Heart right ventricle (tissue), 16 donors: ENCODE measurements at regions of chr5 and their contacts with region 1.

Region 1: GRCh38 chr5:58886315-58887207 is 303.7 kb downstream of the RAB3C start:
- DNase-seq: peak; percentile 46 to 56
- ATAC-seq: peak; percentile 36 to 80 (median 50)
- H3K4me3 ChIP-seq: no peak overlapping the region
- H3K27ac ChIP-seq: peak overlapping the region in 1 of 10 donors; percentile 64
- H3K4me1 ChIP-seq: peaks cover 0 to 17% (median 8%) of the 10 kb centered on the region in 9 donors
- H3K27me3 ChIP-seq: no peaks in the 10 kb centered on the region
- CTCF ChIP-seq: peak; percentile 83 to 93 (median 88)

Region 2: GRCh38 chr5:59007460-59008063 is 121.0 kb after region 1 on chr5:
- intact Hi-C with region 1: loop called in 8 of 10 experiments (anchors 2 to 10 kb)
- DNase-seq: no peak
- ATAC-seq: no peak
- H3K4me3 ChIP-seq: no peak overlapping the region
- H3K27ac ChIP-seq: no peak overlapping the region
- H3K4me1 ChIP-seq: peaks cover 0 to 10% (median 4%) of the 10 kb centered on the region in 9 donors
- H3K27me3 ChIP-seq: no peaks in the 10 kb centered on the region
- CTCF ChIP-seq: peak in 8 of 9 donors; percentile 26 to 70 (median 58)

Region 3: DNA sequence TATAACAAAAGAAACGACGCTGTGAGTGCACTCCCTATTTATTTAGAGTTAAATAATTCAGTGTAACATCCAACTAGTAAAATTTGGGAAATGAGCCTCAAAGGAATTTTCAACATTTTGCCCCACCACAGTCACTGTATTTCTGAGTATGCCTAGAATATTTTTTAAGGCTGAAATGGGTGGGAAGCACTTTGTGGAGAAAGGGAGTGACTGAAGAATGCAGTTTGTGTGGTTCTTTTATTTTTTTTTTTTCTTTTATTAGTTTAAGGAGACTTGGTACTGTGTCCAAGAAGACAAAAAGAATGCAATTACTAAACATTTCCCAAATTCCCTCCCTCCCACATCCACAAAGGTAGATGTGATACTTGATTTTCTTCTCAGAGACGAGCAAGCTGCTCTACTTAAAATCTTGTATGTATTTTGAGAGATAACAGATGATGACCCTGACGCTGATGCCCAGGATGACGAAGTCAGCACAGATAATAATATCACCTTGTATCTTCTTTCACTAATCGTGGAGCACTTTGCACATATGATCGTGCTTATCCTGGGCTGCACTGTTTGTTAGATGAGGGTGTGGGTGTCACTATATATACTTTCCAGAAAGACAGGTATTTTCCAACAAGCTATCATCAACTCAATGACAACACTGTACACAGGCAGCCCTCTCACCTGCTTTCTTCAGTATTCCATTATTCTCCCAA is 282.7 kb after region 1 on chr5:
- intact Hi-C with region 1: loop called in 8 of 10 experiments (anchors 2 to 10 kb)
- DNase-seq: no peak
- ATAC-seq: peak in 1 of 8 donors; percentile 39
- H3K4me3 ChIP-seq: no peak overlapping the region
- H3K27ac ChIP-seq: no peak overlapping the region
- H3K4me1 ChIP-seq: peaks cover 0 to 19% (median 0%) of the 10 kb centered on the region in 9 donors
- H3K27me3 ChIP-seq: no peaks in the 10 kb centered on the region
- CTCF ChIP-seq: no peak

Region 4: DNA sequence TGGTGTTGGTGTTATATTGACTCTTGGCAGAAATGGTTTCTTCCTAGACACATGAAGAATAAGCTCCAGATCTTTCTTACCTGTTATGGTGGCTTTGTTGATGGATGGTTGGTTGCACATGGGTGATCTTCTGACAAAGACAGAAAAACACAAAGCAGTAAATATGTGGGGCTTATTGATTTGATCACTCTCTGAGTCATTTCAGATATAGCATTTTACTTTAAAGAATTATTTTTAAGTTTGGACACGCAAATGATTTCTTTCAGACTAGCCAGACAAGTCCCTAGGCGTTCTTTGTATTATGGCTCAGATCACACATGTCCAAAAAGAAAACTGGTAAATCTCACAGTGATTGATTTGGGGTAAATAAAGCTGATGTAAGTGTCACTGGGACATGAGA is 294.0 kb after region 1 on chr5:
- intact Hi-C with region 1: loop called in 7 of 10 experiments (anchors 2 to 10 kb)
- DNase-seq: no peak
- ATAC-seq: no peak
- H3K4me3 ChIP-seq: no peak overlapping the region
- H3K27ac ChIP-seq: no peak overlapping the region
- H3K4me1 ChIP-seq: no peaks in the 10 kb centered on the region
- H3K27me3 ChIP-seq: no peaks in the 10 kb centered on the region
- CTCF ChIP-seq: no peak

Region 5: GRCh38 chr5:59380350-59380951 is 493.9 kb after region 1 on chr5:
- intact Hi-C with region 1: loop called in 3 of 10 experiments (anchors 10 kb)
- DNase-seq: no peak
- ATAC-seq: peak in 6 of 8 donors; percentile 38 to 77 (median 67)
- H3K4me3 ChIP-seq: no peak overlapping the region
- H3K27ac ChIP-seq: no peak overlapping the region
- H3K4me1 ChIP-seq: no peaks in the 10 kb centered on the region
- H3K27me3 ChIP-seq: no peaks in the 10 kb centered on the region
- CTCF ChIP-seq: peak; percentile 11 to 74 (median 63)